ENCODE measurements at regions of chr16 and their contacts with region 1.

Region 1: DNA sequence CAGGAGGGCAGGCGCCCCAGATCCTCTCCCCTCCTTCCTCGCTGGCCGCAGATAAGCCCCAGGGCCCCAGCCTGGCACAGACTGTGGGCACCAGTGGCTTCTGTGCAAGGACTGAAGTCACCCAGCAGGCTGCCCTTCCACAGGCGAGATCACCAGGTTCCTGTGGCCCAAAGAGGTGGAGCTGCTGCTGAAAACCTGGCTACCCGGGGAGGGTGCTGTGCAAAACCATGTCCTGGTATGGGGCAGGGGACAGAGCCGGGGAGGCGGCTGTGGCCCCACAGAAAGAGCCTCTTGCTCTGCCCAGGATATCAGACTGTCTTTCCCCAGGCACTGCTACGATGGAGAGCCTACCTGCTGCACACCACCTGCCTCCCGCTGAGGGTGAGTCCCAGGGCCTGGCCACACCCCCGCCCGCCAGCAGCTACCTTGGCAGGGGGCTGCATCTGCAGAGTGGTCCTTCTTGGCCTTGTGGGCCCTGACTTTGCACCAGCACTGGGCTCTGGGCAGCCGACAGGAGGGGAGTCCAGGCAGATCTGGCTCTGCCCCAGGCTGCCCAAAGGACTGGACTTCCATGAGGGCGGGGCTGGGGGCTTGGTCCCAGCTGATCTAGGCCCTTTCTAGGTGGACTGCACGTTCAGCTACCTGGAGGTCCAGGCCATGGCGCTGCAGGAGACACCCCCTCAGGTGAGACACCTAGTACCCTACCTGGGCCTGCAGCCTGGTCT is 615 bp downstream of the CARMIL2 start:
- DNase-seq: no peak
- H3K4me3 ChIP-seq: peak overlapping the region in 1 of 2 donors; percentile 26
- H3K27ac ChIP-seq: no peak overlapping the region
- H3K4me1 ChIP-seq: no peaks in the 10 kb centered on the region
- H3K27me3 ChIP-seq: peaks cover 28% of the 10 kb centered on the region
- CTCF ChIP-seq: no peak
- POLR2A ChIP-seq: no peak

Region 2: GRCh38 chr16:67546761-67547422 is 98.7 kb before region 1 on chr16:
- intact Hi-C with region 1: loop called (anchors 2 kb)
- DNase-seq: peak; percentile 64
- H3K4me3 ChIP-seq: no peak overlapping the region
- H3K27ac ChIP-seq: peak overlapping the region in 1 of 2 donors; percentile 13
- H3K4me1 ChIP-seq: no peaks in the 10 kb centered on the region
- H3K27me3 ChIP-seq: no peaks in the 10 kb centered on the region
- CTCF ChIP-seq: peak; percentile 87 to 91 (median 90)
- POLR2A ChIP-seq: no peak

Measured in prostate gland (tissue), 2 donors.